Activated CD8-positive, alpha-beta T cell treated with anti-CD3 and anti-CD28 coated beads for 36 hours (primary cell): ENCODE measurements at regions of chr6 and their contacts with region 1.

Region 1: DNA sequence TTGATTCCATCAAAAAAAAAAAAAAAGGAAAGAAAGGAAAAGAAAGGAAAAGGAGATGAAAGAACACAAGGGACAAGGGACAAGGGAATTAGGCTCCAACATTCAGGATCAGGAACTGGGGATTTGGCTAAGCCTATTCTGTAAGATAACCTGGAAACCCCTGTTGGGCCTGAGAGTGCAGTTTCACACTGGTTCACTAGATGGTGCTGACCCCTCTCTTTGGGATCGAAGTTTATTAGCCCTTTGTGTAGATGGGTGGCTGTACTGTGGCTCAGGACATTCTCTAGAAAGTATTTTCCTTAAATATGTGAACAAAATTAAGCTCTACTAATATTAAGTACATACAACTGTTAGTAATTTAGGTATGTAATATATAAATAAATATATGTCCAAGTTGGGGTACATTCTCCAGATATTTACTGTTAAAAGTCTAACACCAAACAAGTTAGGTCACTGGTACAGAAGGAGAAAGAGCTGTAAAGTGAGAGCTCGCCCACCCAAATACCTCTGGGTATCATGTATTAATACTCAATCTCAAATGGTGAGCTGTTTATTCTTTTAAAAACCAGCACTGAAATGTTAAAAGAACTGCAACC is 6.3 kb downstream of the OR2A4 start:
- DNase-seq: peak; percentile 62
- ATAC-seq: peak; percentile 94
- H3K4me3 Mint-ChIP-seq: no peak overlapping the region
- H3K27ac Mint-ChIP-seq: no peak overlapping the region
- H3K4me1 Mint-ChIP-seq: no peaks in the 10 kb centered on the region
- H3K27me3 Mint-ChIP-seq: peaks cover 2% of the 10 kb centered on the region
- CTCF ChIP-seq: peak; percentile 73

Region 2: DNA sequence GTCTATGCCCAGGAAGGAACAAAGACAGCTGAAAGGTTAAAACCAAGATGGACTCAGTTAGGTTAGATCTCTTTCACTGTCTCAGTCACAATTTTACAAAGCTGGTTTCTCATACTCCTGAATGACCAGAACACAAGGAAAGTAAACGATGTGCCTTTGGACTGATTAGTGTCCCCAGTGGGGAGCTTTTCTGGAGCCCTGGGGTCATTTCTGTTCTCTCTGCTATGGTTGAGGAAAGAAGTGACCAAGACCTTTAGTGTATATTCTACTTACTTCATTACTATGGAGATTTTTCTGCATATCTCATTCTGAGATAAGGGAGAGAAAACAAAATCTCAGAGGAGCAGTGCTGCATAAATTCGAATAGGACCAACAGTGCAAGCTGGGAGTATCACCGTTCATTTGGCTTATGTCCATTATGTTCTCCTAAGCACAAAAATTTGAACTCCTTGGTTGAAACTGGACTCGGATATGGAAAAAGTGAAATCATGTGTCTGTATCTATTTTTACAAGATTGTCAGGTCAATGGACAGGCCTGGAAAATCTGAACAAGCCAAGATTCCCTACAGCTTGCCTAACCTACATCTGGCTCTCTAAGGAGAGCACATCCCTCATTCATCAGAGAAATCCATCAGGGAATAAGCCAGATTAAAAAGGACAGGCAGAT is 78.5 kb after region 1 on chr6:
- CTCF ChIA-PET with region 1: interaction called, 11 read pairs
- POLR2A ChIA-PET with region 1: no interaction called
- intact Hi-C with region 1: no loop called
- DNase-seq: no peak
- ATAC-seq: no peak
- H3K4me3 Mint-ChIP-seq: no peak overlapping the region
- H3K27ac Mint-ChIP-seq: no peak overlapping the region
- H3K4me1 Mint-ChIP-seq: no peaks in the 10 kb centered on the region
- H3K27me3 Mint-ChIP-seq: peaks cover 15% of the 10 kb centered on the region
- CTCF ChIP-seq: no peak

Region 3: DNA sequence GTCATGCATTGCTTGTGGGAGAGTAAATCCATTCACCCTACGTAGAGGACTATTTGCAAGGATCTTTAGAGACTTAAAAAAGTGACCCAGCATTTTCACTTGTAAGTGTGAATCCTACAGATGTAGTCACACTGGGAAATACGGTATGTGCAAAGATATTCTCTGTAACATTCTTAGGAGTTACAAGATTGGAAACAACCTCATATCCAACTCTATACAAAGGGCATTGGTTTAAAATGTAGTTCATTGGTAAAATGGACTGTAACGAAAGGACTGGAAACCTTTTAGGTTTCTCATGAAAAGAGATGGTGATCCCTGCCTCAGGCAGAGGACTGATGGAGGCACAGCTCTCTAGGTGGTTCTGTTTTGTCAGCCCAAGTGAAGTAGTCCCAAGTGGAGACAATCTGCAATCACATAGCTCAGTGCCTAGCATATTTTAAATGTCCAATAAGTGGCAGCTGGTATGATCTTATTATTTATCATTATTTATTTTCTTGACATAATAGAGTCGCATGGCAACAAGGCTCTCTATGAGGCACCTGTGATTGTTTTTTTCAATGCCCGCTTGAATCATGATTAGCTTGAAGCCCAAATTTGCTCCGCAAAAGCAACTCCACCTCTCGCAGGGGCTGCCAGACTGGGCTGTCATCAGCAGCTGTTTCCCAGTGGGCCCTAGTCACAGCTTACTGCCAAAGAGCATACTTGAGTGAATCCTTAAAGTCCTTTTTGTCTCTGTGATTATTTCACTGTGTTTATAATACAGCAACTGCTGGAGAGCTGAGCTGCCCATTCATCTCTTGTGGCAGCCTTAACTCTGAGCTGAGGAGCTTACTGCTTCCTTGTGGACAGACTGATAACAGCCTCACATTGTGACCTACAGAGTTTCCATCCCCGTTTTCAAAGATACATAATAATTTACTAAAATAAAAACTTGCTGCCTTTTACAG is 93.1 kb after region 1 on chr6:
- CTCF ChIA-PET with region 1: no interaction called
- POLR2A ChIA-PET with region 1: no interaction called
- intact Hi-C with region 1: loop called (anchors 10 kb)
- DNase-seq: no peak
- ATAC-seq: no peak
- H3K4me3 Mint-ChIP-seq: no peak overlapping the region
- H3K27ac Mint-ChIP-seq: no peak overlapping the region
- H3K4me1 Mint-ChIP-seq: peaks cover 14% of the 10 kb centered on the region
- H3K27me3 Mint-ChIP-seq: peaks cover 19% of the 10 kb centered on the region
- CTCF ChIP-seq: no peak

Region 4: DNA sequence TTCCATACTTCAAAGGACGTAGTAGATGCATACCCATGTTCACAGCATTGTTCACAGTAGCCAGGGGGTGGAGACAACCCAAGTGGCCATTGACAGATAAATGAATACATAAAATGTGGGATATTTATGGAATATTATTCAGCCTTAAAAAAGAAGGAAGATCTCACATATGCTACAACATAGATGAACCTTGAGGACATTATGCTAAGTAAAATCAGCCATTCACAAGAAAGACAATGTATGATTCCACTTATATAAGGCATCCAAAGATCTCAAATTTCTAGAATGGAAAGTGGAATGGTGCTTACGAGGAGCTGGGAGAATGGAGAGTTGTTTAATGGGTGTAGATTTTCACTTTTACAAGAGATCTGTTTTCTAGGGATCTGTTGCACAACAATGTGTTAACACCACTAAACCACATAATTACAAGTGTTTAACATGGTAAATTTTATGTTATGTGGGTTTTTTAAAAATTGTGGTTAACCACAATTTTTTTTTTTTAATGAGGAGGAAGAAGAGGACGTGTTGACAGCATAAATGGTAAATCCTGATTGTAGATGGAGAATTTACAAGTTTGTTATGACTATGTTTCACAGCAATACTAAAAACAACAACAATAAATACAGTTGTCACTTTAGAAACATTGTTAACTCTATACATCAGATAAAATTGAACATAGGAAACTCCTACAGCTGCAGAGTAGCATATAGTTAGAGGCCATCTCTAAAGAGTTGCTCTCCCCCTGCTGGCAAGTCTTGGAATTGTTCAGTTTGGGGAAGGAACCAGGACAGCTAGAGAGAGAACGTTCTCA is 214.7 kb after region 1 on chr6:
- CTCF ChIA-PET with region 1: interaction called, 44 read pairs
- POLR2A ChIA-PET with region 1: no interaction called
- intact Hi-C with region 1: no loop called
- DNase-seq: peak; percentile 87
- ATAC-seq: peak; percentile 97
- H3K4me3 Mint-ChIP-seq: no peak overlapping the region
- H3K27ac Mint-ChIP-seq: no peak overlapping the region
- H3K4me1 Mint-ChIP-seq: peaks cover 7% of the 10 kb centered on the region
- H3K27me3 Mint-ChIP-seq: peaks cover 24% of the 10 kb centered on the region
- CTCF ChIP-seq: peak; percentile 89

Region 5: DNA sequence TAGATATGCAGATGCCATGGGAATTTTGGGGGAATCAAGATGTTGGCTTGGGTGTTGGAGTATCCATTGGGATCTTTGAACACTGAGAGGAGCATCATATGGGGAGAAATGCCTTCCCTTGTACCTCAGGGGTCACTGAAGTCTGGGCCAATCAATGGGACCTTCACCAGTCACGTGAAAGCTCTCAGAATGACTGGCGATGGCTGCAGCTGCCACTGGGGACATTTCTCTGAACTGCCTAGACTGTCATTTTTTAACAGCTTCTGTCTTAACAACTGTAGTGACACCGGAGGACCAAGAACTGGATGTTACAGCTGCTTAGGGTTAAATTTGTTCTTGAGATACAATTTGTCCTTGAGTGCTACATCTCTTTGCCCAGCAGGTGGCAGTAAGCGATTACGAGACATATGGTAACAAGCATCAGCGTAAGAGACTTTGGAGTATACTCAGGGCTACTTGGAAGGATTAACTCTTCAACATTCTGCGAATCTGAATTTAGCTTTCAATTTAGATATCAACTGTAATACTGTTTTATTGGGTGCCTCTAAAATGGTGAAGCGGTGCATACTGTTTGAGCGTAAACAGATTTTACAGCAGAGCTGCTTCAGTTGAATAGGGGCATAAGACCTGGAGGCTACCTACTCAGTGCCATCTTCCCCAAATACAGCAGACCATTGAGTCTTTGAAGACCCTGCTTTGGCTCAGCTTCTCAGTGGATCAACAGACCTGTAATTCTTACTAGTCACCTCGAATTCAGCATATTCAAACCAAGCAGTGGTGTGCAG is 220.2 kb after region 1 on chr6:
- CTCF ChIA-PET with region 1: interaction called, 44 read pairs
- POLR2A ChIA-PET with region 1: no interaction called
- intact Hi-C with region 1: no loop called
- DNase-seq: peak; percentile 79
- ATAC-seq: peak; percentile 73
- H3K4me3 Mint-ChIP-seq: no peak overlapping the region
- H3K27ac Mint-ChIP-seq: no peak overlapping the region
- H3K4me1 Mint-ChIP-seq: peaks cover 16% of the 10 kb centered on the region
- H3K27me3 Mint-ChIP-seq: peaks cover 52% of the 10 kb centered on the region
- CTCF ChIP-seq: peak; percentile 73